ENCODE measurements at regions of chr11 and their contacts with region 1.

Region 1: DNA sequence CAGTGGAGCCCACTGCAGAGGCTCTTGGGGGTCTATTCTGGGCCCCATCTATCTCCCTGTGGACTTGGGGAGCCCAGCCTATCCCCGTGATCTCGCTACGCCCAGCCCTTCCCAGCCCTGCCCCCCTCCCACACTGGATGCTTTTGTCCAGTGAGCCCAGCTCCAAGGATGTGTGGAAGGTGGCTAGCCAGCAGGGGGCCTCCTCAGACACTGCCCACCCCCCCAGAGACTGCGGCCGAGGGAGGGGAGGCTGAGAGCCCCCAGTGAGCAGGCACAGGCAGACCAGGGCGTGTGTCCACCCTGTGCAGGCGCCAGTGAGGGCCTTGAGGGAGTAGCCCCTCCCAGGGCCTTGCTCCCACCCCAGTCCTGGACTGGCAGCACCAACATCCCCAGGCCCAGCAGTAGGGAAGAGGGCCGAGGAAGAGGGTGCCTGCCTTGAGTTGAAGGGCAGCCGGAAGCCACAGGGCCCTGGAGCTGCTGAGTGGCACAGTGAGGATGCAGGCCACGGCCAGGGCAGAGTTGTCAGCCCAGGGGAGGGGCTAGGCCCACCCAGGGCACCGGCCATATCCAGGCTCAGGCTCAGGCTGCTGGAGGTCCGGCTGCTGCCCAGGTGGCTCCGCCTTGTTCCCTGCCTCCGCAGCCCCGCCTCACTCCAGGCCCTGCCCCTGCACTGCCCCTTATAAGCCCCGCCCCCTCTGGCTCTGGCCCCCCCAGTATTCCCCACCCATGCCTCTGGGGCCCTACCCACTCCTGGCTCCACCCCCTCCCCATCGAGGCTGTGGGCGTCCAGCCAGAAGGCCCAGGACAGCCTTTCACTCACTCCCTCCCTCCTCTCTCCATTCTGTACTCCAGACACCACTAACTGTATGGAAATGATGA is 28.0 kb downstream of the MOB2 start:
- DNase-seq: peak; percentile 74 to 96
- H3K4me3 ChIP-seq: peak overlapping the region; percentile 52 to 53
- H3K27ac ChIP-seq: peak overlapping the region; percentile 98 to 99
- H3K4me1 ChIP-seq: peaks cover 0 to 73% (median 51%) of the 10 kb centered on the region in 4 donors
- H3K27me3 ChIP-seq: no peaks in the 10 kb centered on the region
- CTCF ChIP-seq: peak; percentile 30 to 38

Region 2: DNA sequence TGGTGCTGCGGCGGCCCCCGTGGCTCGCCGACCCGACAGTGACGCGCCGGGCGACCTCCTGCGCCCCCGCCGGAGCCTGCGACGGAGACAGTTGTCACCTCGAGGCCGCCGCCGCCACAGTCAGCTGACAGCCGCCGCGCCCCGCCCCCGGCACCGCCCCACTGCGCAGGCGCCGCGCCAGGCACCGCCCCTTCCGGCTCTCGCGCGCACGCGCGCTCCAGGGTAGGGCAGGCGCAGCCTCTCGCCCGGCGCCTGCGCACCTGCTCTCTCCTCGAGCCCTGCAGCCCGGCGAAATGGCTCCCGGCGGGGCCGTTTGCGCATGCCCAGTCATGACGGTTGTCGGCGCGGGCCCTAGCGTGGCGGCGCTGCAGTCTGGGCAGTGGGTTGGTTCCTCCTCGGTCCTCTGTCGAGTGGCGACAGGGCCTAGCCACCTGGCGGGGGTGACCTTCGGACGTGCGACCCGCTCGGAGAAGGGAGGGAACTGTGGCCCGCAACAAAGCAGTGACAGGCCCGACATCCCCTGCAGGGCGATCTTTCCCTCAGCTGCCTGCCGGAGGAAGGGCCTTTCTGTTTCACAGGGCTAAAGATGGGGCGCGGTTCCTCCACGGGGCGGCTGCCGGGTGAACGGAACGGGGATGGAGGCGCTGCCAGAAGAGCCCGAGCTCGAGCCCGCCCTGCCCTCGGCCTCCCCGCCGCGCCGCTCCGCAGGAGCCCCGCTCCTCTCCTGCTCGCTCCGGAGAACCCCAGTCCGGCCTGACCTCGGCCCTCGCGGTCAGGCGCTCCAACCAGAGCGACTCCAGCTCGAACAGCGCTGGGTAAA is 148.9 kb before region 1 on chr11 and contains the start of gene TOLLIP:
- intact Hi-C with region 1: loop called (anchors 5 kb)
- DNase-seq: peak; percentile 93 to 98
- H3K4me3 ChIP-seq: peak within 1 kb of the TSS; percentile 90 to 92
- H3K27ac ChIP-seq: peak within 1 kb of the TSS; percentile 87 to 97
- H3K4me1 ChIP-seq: peaks cover 0 to 39% (median 34%) of the 10 kb centered on the region in 4 donors
- H3K27me3 ChIP-seq: no peaks in the 10 kb centered on the region
- CTCF ChIP-seq: peak; percentile 29 to 30

Region 3: DNA sequence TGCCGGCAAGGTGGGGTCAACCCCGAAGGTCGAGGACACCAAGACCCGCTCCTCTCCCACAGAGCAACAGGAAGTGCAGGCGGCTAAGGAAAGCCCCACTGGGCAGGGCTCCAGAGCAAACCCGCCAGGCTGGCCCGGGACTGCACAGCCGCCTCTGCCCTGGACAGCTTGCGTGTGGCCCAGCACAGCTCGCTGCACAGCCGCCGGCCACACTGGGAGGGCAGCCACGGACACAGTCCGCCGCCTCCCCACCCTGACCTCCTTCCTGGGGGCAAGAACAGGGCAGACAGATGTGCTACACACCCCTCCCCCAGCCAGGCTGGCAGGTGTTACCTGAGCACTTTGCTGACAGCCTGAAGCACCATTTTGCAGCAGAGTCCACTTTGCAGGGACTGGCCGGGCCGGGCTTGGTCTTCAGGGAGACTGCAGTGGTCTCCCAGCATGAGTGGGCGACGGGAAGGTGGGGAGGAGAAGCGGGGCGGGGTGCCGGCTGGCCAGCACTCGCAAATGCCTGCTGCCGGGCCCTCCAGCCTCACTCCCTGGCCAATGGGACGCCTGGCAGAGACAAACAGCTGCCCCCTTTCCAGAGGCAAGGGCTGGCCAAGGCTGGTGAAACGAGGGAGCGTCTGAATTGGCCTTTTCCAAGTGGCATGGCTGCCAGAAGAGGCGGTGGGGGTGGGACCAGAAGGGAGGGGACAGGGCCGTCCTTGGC is 27.7 kb after region 1 on chr11 and contains the start of gene MOB2:
- intact Hi-C with region 1: loop called (anchors 2 kb)
- DNase-seq: peak; percentile 53 to 96
- H3K4me3 ChIP-seq: peak within 1 kb of the TSS; percentile 58 to 81
- H3K27ac ChIP-seq: peak within 1 kb of the TSS; percentile 94 to 96
- H3K4me1 ChIP-seq: peaks cover 0 to 86% (median 69%) of the 10 kb centered on the region in 4 donors
- H3K27me3 ChIP-seq: no peaks in the 10 kb centered on the region
- CTCF ChIP-seq: no peak

Region 4: DNA sequence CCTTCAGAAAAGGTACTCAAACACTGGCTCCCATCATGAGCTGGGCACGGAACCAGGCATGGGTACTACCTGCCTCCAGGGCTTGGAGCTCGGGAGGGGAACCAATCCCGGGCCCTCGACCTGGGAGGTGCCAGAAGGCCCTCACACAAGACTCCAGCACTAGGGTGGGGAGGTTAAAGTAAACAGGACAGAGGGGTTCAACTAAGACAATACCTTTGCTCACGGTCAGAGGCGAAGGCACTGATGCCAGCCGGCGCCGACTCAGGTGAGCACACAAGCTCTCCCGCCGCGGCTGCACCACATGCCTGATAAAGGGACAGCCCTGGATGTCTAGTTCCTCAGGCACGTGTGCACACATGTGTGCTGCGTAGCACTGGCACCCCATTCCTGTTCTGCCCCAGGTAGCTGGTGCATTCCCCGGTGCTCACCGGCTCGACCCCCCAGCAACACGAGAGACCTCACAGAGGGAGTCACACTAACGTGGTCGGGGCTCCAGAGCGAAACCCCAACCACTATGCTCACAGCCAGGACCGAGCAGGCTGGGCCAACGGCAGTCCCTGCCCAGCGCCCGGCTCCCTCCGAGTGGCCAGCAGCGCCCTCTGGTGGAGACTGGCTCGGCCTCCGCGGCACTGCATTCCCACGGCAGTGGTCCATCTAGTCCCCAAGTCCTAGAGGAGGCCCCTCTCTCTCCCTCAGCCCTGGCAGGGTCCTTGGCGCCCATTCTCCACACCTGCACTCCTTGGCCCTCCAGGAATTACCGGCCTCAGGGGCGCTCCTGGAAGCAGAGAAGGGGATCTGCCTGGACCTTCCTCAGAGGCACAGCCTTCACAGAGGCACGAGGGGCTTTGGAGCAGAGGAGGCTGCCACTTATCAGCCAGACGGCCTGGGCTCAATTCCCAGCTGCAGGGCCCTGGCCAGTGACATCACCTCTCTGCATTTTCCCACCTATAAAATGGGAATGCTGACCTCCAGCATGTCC is 56.8 kb after region 1 on chr11:
- intact Hi-C with region 1: loop called (anchors 2 kb)
- DNase-seq: peak; percentile 72 to 87
- H3K4me3 ChIP-seq: peak overlapping the region; percentile 16 to 28
- H3K27ac ChIP-seq: peak overlapping the region; percentile 48 to 52
- H3K4me1 ChIP-seq: peaks cover 0 to 63% (median 45%) of the 10 kb centered on the region in 4 donors
- H3K27me3 ChIP-seq: no peaks in the 10 kb centered on the region
- CTCF ChIP-seq: peak; percentile 92 to 97

Region 5: DNA sequence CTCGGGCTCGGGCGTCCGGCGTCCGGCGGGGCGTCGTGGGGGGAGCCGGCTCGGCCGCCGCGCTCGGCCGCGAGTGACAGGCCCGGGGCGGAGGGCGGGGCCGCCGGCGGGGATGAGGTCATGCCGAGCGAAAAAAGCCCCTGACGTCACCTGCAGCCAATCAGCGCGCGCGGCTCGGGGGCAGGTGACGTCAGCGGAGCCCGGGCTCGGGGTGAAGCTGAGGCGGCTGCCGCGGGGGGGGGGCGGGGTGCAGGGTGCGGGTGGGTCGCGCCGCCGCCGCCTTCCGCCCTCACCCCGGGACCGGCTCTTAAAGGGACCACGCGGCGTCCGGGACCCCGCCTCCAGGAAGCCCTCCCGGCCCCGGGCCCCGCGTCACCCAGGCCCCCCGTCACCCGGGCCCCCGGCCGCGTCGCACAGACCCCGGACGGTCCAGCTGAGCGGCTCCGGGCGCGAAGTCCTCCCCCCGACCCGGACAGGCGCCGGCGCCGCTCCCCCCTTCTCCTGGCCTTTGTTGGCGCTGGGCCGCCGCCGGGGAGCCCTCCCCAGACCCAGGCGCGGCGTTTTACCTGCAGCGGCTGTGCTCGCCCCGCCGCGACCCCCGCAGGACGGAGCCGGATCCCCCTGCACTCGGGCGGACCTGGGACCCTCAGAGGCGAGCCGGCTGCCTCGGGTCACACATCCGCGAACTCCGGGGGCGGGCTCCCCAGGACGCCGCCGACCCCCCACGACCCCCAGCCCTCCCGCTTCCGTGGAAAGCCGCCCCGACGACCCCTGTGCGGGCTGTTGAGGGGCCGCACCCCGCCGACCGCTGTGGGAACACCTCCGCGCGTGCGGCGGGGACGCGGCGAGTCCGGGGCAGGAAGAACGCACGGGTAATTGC is 113.9 kb after region 1 on chr11 and contains the start of gene DUSP8:
- intact Hi-C with region 1: loop called (anchors 10 kb)
- DNase-seq: peak; percentile 88 to 96
- H3K4me3 ChIP-seq: peak within 1 kb of the TSS; percentile 65 to 85
- H3K27ac ChIP-seq: peak within 1 kb of the TSS; percentile 85 to 89
- H3K4me1 ChIP-seq: peaks cover 0 to 64% (median 58%) of the 10 kb centered on the region in 4 donors
- H3K27me3 ChIP-seq: no peaks in the 10 kb centered on the region
- CTCF ChIP-seq: no peak

Region 6: DNA sequence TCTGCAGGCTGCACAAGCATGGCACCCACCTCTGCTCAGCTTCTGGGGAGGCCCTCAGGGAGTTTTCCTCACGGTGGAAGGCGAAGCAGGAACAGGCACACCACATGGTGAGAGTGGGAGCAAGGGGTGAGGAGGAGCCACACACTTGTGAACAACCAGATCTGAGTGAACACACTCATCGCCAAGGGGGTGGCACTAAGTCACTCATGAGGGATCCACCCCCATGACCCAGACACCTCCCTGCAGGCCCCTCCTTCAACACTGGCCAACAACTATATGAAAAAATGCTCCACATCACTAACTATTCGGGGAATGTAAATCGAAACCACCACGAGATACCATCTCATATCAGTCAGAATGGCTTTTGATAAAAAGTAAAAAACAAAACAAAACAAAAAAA is 140.2 kb after region 1 on chr11:
- intact Hi-C with region 1: no loop called
- DNase-seq: peak in 1 of 2 donors; percentile 10
- H3K4me3 ChIP-seq: no peak overlapping the region
- H3K27ac ChIP-seq: no peak overlapping the region
- H3K4me1 ChIP-seq: no peaks in the 10 kb centered on the region
- H3K27me3 ChIP-seq: peaks cover 0 to 17% of the 10 kb centered on the region in 2 donors
- CTCF ChIP-seq: no peak

Measured in tibial artery (tissue), 4 donors.